ENCODE measurements at regions of chr4 and their contacts with region 1.

Region 1: GRCh38 chr4:185183619-185184281 is 20.1 kb downstream of the CFAP97 start:
- DNase-seq: peak; percentile 65 to 81 (median 67)
- H3K4me3 ChIP-seq: no peak overlapping the region
- H3K4me3 Mint-ChIP-seq: no peak overlapping the region
- H3K27ac ChIP-seq: no peak overlapping the region
- H3K27ac Mint-ChIP-seq: peak overlapping the region in 1 of 8 donors; percentile 22
- H3K4me1 ChIP-seq: no peaks in the 10 kb centered on the region
- H3K4me1 Mint-ChIP-seq: peaks cover 35 to 63% (median 43%) of the 10 kb centered on the region in 3 donors
- H3K27me3 ChIP-seq: no peaks in the 10 kb centered on the region
- H3K27me3 Mint-ChIP-seq: no peaks in the 10 kb centered on the region

Region 2: DNA sequence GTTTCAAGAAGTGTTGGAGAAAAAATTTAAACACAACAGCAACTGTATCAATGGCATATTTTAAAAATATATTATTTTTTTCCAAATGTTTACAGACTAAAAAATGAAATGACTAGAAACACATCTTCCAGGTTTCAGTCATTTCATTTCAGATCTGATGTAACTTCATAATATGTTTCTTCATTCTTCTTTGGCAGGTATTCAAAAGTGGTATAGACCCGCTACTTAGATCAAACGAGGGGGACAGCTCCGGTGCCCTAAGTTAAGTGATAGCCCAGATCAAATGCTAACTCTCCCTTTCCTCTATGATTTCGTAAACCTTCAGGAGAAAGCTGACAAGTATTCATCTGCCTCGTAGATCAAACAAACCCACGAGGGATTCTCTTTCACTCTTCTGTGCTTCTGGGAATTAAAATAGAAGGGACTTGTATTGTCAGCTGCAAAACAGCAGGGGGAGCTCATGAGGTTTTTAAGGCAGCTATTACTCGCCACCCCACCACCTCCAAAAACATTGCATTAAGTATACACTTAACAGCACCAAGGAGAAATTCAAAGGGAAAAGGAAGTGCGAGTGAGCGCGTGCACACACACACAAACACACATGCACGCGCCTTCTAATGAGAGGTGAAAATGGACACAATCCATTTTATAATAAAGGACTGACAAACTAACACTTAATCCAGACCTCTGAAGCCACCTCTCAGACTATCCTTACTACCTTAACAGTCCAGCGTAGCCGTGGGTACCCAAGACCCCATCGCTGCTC is 144.1 kb before region 1 on chr4:
- CTCF ChIA-PET with region 1: interaction called, 19 read pairs
- POLR2A ChIA-PET with region 1: no interaction called
- DNase-seq: peak; percentile 14 to 59 (median 50)
- H3K4me3 ChIP-seq: no peak overlapping the region
- H3K4me3 Mint-ChIP-seq: peak overlapping the region in 1 of 7 donors; percentile 28
- H3K27ac ChIP-seq: no peak overlapping the region
- H3K27ac Mint-ChIP-seq: no peak overlapping the region
- H3K4me1 ChIP-seq: no peaks in the 10 kb centered on the region
- H3K4me1 Mint-ChIP-seq: peaks cover 3 to 6% (median 5%) of the 10 kb centered on the region in 3 donors
- H3K27me3 ChIP-seq: no peaks in the 10 kb centered on the region
- H3K27me3 Mint-ChIP-seq: peaks cover 2 to 24% of the 10 kb centered on the region in 2 donors

Region 3: GRCh38 chr4:185142912-185143595 is 40.7 kb before region 1 on chr4 and contains the start of gene SLC25A4:
- CTCF ChIA-PET with region 1: interaction called, 10 read pairs
- POLR2A ChIA-PET with region 1: no interaction called
- DNase-seq: peak; percentile 79 to 92 (median 87)
- H3K4me3 ChIP-seq: peak within 1 kb of the TSS; percentile 74
- H3K4me3 Mint-ChIP-seq: peak within 1 kb of the TSS; percentile 90 to 93 (median 92)
- H3K27ac ChIP-seq: peak within 1 kb of the TSS; percentile 46
- H3K27ac Mint-ChIP-seq: peak within 1 kb of the TSS; percentile 79 to 92 (median 89)
- H3K4me1 ChIP-seq: peaks cover 8% of the 10 kb centered on the region
- H3K4me1 Mint-ChIP-seq: peaks cover 19 to 29% (median 25%) of the 10 kb centered on the region in 3 donors
- H3K27me3 ChIP-seq: no peaks in the 10 kb centered on the region
- H3K27me3 Mint-ChIP-seq: peaks cover 2 to 11% of the 10 kb centered on the region in 2 donors
- total RNA-seq, gene SLC25A4: 11.8 to 12.6 TPM

Region 4: GRCh38 chr4:185171373-185172071 is 12.2 kb before region 1 on chr4:
- CTCF ChIA-PET with region 1: interaction called, 11 read pairs
- POLR2A ChIA-PET with region 1: no interaction called
- DNase-seq: no peak
- H3K4me3 ChIP-seq: no peak overlapping the region
- H3K4me3 Mint-ChIP-seq: no peak overlapping the region
- H3K27ac ChIP-seq: no peak overlapping the region
- H3K27ac Mint-ChIP-seq: no peak overlapping the region
- H3K4me1 ChIP-seq: peaks cover 2% of the 10 kb centered on the region
- H3K4me1 Mint-ChIP-seq: peaks cover 4 to 13% (median 6%) of the 10 kb centered on the region in 3 donors
- H3K27me3 ChIP-seq: no peaks in the 10 kb centered on the region
- H3K27me3 Mint-ChIP-seq: no peaks in the 10 kb centered on the region

Measured in CD8-positive, alpha-beta memory T cell (primary cell).